Lower leg skin (tissue), 4 donors: ENCODE measurements at regions of chr13 and their contacts with region 1.

Region 1: GRCh38 chr13:42174344-42175162 is 97.4 kb upstream of the AKAP11 start:
- DNase-seq: no peak
- H3K4me3 ChIP-seq: no peak overlapping the region
- CTCF ChIP-seq: no peak
- POLR2A ChIP-seq: no peak

Region 2: GRCh38 chr13:43274881-43275280 is 1100.3 kb after region 1 on chr13:
- intact Hi-C with region 1: loop called (anchors 5 kb)
- DNase-seq: no peak
- H3K4me3 ChIP-seq: no peak overlapping the region
- CTCF ChIP-seq: no peak
- POLR2A ChIP-seq: no peak